H1 (cell line): ENCODE measurements at regions of chr17 and their contacts with region 1.

Region 1: GRCh38 chr17:10737168-10737622 is 7.4 kb upstream of the TMEM220 start:
- DNase-seq: peak in 1 of 2 experiments; percentile 66
- H3K4me3 ChIP-seq: no peak overlapping the region
- H3K27ac ChIP-seq: no peak overlapping the region
- H3K4me1 ChIP-seq: no peaks in the 10 kb centered on the region
- H3K27me3 ChIP-seq: no peaks in the 10 kb centered on the region
- CTCF ChIP-seq: peak; percentile 68 to 81 (median 80)
- EP300 ChIP-seq: no peak
- POLR2A ChIP-seq: no peak
- RAD21 ChIP-seq: peak; percentile 94

Region 2: GRCh38 chr17:10631048-10631700 is 106.0 kb before region 1 on chr17:
- CTCF ChIA-PET with region 1: interaction called, 14 read pairs
- POLR2A ChIA-PET with region 1: no interaction called
- DNase-seq: peak in 1 of 2 experiments; percentile 85
- H3K4me3 ChIP-seq: no peak overlapping the region
- H3K27ac ChIP-seq: no peak overlapping the region
- H3K4me1 ChIP-seq: no peaks in the 10 kb centered on the region
- H3K27me3 ChIP-seq: no peaks in the 10 kb centered on the region
- CTCF ChIP-seq: peak; percentile 75 to 79 (median 78)
- EP300 ChIP-seq: no peak
- POLR2A ChIP-seq: no peak
- RAD21 ChIP-seq: peak; percentile 65 to 70

Region 3: GRCh38 chr17:10713318-10713717 is 23.9 kb before region 1 on chr17:
- CTCF ChIA-PET with region 1: no interaction called
- POLR2A ChIA-PET with region 1: no interaction called
- DNase-seq: no peak
- H3K4me3 ChIP-seq: no peak overlapping the region
- H3K27ac ChIP-seq: no peak overlapping the region
- H3K4me1 ChIP-seq: no peaks in the 10 kb centered on the region
- H3K27me3 ChIP-seq: no peaks in the 10 kb centered on the region
- CTCF ChIP-seq: no peak
- EP300 ChIP-seq: no peak
- POLR2A ChIP-seq: no peak
- RAD21 ChIP-seq: no peak

Region 4: GRCh38 chr17:10748531-10749163 is 11.5 kb after region 1 on chr17:
- CTCF ChIA-PET with region 1: interaction called, 44 read pairs
- POLR2A ChIA-PET with region 1: interaction called, 3 read pairs
- DNase-seq: no peak
- H3K4me3 ChIP-seq: no peak overlapping the region
- H3K27ac ChIP-seq: no peak overlapping the region
- H3K4me1 ChIP-seq: peaks cover 0 to 5% (median 2%) of the 10 kb centered on the region in 4 experiments; a peak in 3 of 7 replicates
- H3K27me3 ChIP-seq: no peaks in the 10 kb centered on the region
- CTCF ChIP-seq: no peak
- EP300 ChIP-seq: no peak
- POLR2A ChIP-seq: no peak
- RAD21 ChIP-seq: no peak

Region 5: DNA sequence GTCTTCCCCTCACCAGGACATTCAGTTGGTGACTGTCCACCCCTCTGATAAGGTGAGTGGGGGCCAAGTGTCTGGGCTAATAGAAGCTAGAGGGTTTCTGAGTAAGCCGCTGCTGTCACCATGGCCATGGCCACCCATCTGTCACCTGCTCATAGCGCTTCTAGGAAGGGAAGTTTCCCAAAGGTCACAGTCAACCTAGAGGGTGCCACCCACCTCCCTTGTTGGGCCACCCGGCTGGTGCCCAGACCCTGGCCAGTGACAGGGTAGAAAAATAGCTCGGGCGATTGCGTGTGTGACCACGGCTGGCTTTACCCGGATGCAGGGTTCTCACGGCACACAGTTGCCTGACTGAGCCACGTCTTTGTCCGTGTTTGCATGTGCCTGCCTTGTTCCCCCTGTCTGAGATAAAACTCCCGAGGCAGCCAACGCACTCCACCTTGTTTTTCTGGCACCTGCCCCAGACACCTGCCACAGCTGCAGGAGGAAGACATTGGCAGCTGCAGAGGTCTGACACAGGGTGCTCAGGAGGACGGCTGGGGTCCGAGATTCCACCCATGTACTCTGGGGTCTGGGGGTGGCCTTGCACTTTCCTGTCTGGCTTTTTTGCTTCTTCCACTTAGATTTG is 99.9 kb after region 1 on chr17:
- CTCF ChIA-PET with region 1: interaction called, 88 read pairs
- POLR2A ChIA-PET with region 1: no interaction called
- DNase-seq: no peak
- H3K4me3 ChIP-seq: no peak overlapping the region
- H3K27ac ChIP-seq: no peak overlapping the region
- H3K4me1 ChIP-seq: peaks cover 0 to 5% (median 0%) of the 10 kb centered on the region in 4 experiments; a peak in 2 of 7 replicates
- H3K27me3 ChIP-seq: no peaks in the 10 kb centered on the region
- CTCF ChIP-seq: no peak
- EP300 ChIP-seq: no peak
- POLR2A ChIP-seq: no peak
- RAD21 ChIP-seq: no peak

Region 6: DNA sequence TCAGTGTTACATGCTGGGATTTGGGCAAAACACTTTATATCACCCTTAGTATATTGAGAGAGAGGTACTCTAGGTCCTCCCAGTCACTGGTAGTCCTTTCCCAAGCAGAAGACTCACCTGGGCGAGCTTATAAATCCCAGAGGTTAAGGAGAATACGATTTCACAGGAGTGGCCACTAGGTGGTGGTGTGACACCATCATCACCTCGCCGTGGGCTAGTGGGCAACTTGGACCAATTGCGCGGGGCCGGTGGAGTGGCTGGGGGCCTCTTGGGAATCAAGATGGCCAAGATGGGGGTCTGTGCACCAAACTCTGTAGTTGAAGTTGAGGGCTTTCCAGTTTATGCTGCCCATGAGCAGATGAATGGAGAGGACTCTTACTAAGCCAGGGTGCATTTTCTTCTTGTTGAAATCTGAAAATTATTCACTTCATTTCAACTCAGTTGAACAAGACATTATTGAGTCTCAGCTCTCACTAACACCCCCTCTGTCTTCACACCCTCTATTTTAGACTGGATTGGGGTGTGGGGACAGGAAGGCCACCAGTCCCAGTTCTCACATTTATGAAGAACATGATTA is 138.9 kb after region 1 on chr17:
- CTCF ChIA-PET with region 1: interaction called, 14 read pairs
- POLR2A ChIA-PET with region 1: no interaction called
- DNase-seq: peak in 1 of 2 experiments; percentile 88
- H3K4me3 ChIP-seq: no peak overlapping the region
- H3K27ac ChIP-seq: no peak overlapping the region
- H3K4me1 ChIP-seq: no peaks in the 10 kb centered on the region
- H3K27me3 ChIP-seq: no peaks in the 10 kb centered on the region
- CTCF ChIP-seq: peak; percentile 74 to 83 (median 75)
- EP300 ChIP-seq: no peak
- POLR2A ChIP-seq: no peak
- RAD21 ChIP-seq: peak; percentile 91 to 96